Activated naive CD4-positive, alpha-beta T cell treated with anti-CD3 and anti-CD28 coated beads for 36 hours (primary cell): ENCODE measurements at regions of chr15 and their contacts with region 1.

Region 1: DNA sequence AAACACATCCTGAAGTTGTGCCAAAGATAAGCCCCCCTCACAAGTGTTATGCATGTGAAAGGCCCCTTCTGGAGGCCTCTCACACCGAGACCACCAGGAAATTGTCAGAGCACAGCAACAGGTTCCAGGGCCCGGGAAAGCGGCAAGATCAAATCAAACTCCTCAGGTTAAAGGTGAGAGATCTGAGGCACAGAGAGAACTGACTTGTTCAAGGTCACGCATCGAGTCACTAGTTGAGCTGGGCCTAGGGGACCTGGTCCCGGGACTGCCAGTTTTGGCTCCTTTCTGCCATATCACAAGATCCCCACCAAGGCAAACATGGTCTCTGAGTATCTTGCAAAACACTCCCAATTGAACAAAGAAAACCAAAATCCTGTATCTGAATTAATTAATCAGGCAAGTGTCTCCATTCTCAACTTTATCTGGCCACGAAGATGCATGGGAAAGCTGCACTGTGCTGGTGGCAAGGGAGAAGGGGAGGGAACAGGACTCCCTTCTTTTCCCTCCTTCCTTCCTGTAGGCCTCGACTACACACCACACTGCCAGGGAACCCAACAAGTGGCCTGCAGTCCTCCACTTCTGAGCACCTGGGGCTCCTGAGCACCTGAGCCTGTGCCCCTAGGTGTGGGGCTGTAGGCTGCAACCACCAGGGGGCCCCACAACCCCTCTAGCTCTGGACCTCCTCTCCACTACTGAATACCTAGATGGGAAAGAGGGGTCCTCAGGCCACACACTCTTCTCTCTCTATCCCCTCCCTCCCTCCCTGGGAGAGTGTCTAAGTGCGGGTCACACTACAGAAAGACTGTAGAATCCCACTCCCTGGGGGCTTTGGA is 37.3 kb downstream of the ANP32A start:
- DNase-seq: peak; percentile 71
- H3K4me3 Mint-ChIP-seq: no peak overlapping the region
- H3K27ac Mint-ChIP-seq: peak overlapping the region; percentile 81
- H3K4me1 Mint-ChIP-seq: peaks cover 39% of the 10 kb centered on the region
- H3K27me3 Mint-ChIP-seq: no peaks in the 10 kb centered on the region

Region 2: GRCh38 chr15:67618297-67618696 is 1165.1 kb before region 1 on chr15:
- CTCF ChIA-PET with region 1: no interaction called
- intact Hi-C with region 1: no loop called
- DNase-seq: no peak
- H3K4me3 Mint-ChIP-seq: no peak overlapping the region
- H3K27ac Mint-ChIP-seq: no peak overlapping the region
- H3K4me1 Mint-ChIP-seq: no peaks in the 10 kb centered on the region
- H3K27me3 Mint-ChIP-seq: no peaks in the 10 kb centered on the region

Region 3: GRCh38 chr15:68658151-68658550 is 125.3 kb before region 1 on chr15:
- CTCF ChIA-PET with region 1: no interaction called
- intact Hi-C with region 1: no loop called
- DNase-seq: no peak
- H3K4me3 Mint-ChIP-seq: no peak overlapping the region
- H3K27ac Mint-ChIP-seq: no peak overlapping the region
- H3K4me1 Mint-ChIP-seq: no peaks in the 10 kb centered on the region
- H3K27me3 Mint-ChIP-seq: no peaks in the 10 kb centered on the region

Region 4: GRCh38 chr15:68795298-68795848 is 11.9 kb after region 1 on chr15:
- CTCF ChIA-PET with region 1: interaction called, 13 read pairs
- intact Hi-C with region 1: no loop called
- DNase-seq: peak; percentile 91
- H3K4me3 Mint-ChIP-seq: peak overlapping the region; percentile 32
- H3K27ac Mint-ChIP-seq: peak overlapping the region; percentile 65
- H3K4me1 Mint-ChIP-seq: peaks cover 98% of the 10 kb centered on the region
- H3K27me3 Mint-ChIP-seq: no peaks in the 10 kb centered on the region

Region 5: DNA sequence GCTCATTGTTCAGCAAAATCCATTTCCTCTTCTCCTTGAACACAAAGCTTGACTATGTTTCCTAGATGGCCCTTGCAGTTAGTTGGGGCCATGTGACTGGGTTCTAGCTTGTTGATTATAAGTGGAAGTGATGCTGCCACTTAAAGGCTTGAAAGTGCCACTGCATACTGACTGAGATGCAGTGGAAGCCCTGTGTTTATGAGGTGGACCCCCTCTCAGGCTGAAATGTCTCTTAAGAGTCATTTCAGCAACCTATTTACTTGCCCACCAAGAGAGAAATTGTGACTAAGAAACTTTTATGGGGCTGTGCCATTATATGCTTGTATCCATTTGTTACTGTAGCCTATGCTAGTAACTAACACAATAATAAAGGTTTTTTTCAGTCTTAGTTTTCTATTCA is 45.6 kb after region 1 on chr15:
- CTCF ChIA-PET with region 1: interaction called, 19 read pairs
- intact Hi-C with region 1: loop called (anchors 1 kb)
- DNase-seq: peak; percentile 47
- H3K4me3 Mint-ChIP-seq: no peak overlapping the region
- H3K27ac Mint-ChIP-seq: no peak overlapping the region
- H3K4me1 Mint-ChIP-seq: peaks cover 18% of the 10 kb centered on the region
- H3K27me3 Mint-ChIP-seq: no peaks in the 10 kb centered on the region

Region 6: GRCh38 chr15:68843425-68844311 is 60.2 kb after region 1 on chr15:
- CTCF ChIA-PET with region 1: no interaction called
- intact Hi-C with region 1: no loop called
- DNase-seq: peak; percentile 33
- H3K4me3 Mint-ChIP-seq: peak overlapping the region; percentile 66
- H3K27ac Mint-ChIP-seq: no peak overlapping the region
- H3K4me1 Mint-ChIP-seq: peaks cover 9% of the 10 kb centered on the region
- H3K27me3 Mint-ChIP-seq: peaks cover 48% of the 10 kb centered on the region